Heart left ventricle (tissue), 16 donors: ENCODE measurements at regions of chr22 and their contacts with region 1.

Region 1: DNA sequence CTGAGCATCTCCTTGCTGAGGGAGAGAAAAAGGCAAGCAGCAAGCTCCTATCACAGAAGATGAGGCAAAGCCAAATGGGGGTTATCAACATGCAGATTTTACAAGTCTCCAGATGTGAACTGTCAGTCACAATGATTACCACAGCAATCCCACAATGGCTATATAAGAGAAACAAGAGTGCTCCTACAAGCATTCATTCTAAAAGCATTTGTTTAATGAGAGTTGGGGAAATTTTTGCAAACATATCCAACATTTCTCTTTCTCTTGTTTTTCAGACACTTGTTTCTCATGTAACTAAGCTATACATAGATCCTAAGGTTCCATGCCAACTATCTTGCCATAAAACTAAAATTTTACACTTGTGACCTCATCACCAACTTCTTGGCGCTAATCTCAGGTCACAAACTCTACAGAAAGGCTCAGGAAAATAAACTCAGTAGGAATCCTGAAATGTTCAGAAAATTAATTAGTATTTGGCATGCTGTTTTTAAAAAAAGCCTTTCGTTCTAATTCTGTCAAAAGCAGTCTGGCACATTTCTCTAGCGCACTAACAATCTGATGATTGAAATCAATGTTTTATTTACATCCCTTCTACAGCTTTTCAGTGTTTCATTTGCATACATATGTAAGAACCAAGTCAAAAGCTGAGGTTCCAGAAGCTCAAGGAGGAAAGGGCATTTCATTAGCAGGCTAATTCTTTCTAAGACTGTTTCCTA is 199.5 kb downstream of the TTC28 start:
- DNase-seq: no peak
- ATAC-seq: no peak
- H3K4me3 ChIP-seq: no peak overlapping the region
- H3K27ac ChIP-seq: no peak overlapping the region
- H3K4me1 ChIP-seq: peaks cover 0 to 6% (median 0%) of the 10 kb centered on the region in 12 donors
- H3K27me3 ChIP-seq: no peaks in the 10 kb centered on the region
- CTCF ChIP-seq: no peak
- POLR2A ChIP-seq: no peak

Region 2: GRCh38 chr22:28408709-28409108 is 71.4 kb before region 1 on chr22:
- intact Hi-C with region 1: loop called in 1 of 10 experiments (anchors 10 kb)
- DNase-seq: no peak
- ATAC-seq: no peak
- H3K4me3 ChIP-seq: no peak overlapping the region
- H3K27ac ChIP-seq: no peak overlapping the region
- H3K4me1 ChIP-seq: peaks cover 0 to 39% (median 14%) of the 10 kb centered on the region in 12 donors
- H3K27me3 ChIP-seq: no peaks in the 10 kb centered on the region
- CTCF ChIP-seq: no peak
- POLR2A ChIP-seq: no peak

Region 3: DNA sequence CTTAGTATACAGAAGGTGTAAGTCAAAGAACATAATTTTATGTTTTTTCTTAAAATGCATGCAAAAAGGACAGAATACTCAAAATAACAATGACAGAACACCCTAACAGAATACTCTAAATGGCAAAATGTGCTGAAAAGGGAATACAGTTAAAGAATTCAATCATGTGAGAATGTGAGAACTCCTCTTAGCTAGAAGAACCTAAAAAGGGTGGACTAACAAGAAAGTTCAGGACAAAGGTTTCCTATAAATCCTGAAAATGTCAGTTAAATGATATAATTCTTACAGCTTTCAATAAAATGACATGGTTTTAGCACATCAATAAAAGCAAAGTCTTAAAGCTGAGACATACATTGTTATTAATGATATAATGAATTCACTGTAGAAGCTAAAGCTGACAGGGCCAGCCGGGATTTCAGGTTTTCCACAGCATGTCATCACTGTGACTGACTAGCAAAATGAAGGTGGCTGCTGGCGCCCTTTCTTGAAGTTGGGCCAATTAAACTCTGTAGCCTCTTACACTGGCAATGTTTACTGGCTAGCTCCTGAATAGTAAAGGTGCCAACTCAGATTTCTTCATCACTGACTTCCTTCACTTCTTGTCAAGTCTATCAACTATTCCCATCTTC is 44.9 kb before region 1 on chr22:
- intact Hi-C with region 1: no loop called
- DNase-seq: peak in 4 of 5 donors; percentile 38 to 60 (median 52)
- ATAC-seq: peak; percentile 75 to 90 (median 82)
- H3K4me3 ChIP-seq: no peak overlapping the region
- H3K27ac ChIP-seq: peak overlapping the region in 5 of 12 donors; percentile 0 to 39 (median 6)
- H3K4me1 ChIP-seq: peaks cover 0 to 34% (median 17%) of the 10 kb centered on the region in 12 donors
- H3K27me3 ChIP-seq: no peaks in the 10 kb centered on the region
- CTCF ChIP-seq: no peak
- POLR2A ChIP-seq: no peak

Region 4: GRCh38 chr22:28557184-28557583 is 77.0 kb after region 1 on chr22:
- intact Hi-C with region 1: no loop called
- DNase-seq: no peak
- ATAC-seq: no peak
- H3K4me3 ChIP-seq: no peak overlapping the region
- H3K27ac ChIP-seq: no peak overlapping the region
- H3K4me1 ChIP-seq: peaks cover 0 to 3% (median 0%) of the 10 kb centered on the region in 12 donors
- H3K27me3 ChIP-seq: no peaks in the 10 kb centered on the region
- CTCF ChIP-seq: no peak
- POLR2A ChIP-seq: no peak